ENCODE measurements at regions of chr2 and their contacts with region 1.

Region 1: DNA sequence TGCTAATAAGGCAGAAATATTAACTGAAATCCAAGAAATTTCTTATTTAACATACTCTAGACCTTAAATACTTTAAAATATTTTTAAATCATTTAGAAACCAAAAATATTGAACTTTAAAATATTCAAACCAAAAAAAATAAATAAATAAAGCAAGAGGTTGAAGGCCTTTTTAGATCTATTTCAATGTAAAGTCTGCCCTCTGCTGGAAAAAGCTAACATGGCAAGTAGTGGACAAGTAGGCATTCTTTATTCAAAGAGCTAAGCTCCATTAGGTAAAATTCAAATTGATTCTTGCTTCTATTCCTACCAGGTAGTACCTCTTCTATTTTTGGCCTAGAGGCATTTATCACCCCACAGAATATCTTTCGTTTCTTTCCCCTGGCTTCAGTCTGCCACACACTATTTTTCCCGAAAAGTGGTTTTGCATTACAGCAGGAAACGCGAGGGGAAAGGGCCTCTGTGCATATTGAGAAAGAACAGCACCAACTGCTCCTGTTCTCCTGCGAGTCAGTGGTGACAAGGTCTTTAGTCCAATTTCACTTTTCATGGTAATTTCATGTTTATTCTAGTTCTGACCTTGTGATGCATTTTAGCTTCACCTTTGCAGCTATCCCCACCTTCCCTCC is 20.4 kb downstream of the IFIH1 start:
- DNase-seq: no peak

Region 2: DNA sequence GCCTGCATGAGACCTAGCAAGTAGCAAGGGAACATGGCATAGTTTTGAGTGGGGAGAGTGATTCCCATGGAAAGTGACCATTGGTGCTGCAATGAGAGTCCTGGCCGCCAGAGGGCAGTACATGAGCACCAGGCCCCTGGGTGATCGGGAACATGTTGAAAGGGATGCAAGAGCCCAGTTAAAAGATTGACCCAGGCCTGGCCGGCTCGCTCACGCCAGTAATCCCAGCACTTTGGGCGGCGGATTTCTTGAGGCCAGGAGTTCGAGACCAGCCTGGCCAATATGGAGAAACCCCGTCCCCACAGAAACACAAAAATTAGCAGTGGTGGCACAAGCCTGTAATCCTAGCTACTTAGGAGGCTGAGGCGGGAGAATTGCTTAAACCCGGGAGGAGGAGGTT is 77.0 kb before region 1 on chr2:
- intact Hi-C with region 1: loop called (anchors 2 to 10 kb)
- DNase-seq: peak; percentile 91

Region 3: DNA sequence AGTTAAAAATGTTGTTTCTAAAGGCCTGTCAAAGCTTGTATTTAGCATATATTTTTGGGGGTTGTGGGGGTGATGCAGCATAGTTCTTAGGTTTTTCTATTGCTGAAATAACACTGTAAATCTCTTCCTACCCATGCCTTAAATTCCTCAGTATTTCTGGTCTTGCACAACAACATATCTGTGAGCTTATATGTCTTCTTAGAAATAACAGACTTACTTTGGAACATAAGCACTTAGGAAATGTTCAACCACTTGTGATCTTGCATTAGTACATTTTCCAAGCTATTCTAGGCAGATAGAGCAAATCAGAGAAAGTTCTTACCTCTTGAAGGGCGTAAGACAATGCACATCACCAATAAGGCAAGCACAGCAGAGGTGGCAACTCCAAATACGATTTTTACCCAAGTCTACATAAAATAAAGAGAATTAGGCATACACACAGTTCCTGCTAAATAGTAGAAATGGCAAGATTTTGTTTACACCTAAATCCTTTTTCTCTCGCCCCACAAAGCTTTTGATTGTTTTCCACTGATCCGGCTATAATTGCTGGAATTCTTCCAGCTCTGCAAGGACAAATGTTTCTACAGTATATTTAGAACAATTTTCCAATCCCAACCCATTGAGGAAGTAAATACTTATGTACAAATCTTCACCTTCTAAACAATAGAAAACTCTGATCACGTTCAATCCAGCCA is 55.3 kb before region 1 on chr2:
- intact Hi-C with region 1: loop called in 1 of 2 experiments (anchors 2 kb)
- DNase-seq: no peak

Region 4: DNA sequence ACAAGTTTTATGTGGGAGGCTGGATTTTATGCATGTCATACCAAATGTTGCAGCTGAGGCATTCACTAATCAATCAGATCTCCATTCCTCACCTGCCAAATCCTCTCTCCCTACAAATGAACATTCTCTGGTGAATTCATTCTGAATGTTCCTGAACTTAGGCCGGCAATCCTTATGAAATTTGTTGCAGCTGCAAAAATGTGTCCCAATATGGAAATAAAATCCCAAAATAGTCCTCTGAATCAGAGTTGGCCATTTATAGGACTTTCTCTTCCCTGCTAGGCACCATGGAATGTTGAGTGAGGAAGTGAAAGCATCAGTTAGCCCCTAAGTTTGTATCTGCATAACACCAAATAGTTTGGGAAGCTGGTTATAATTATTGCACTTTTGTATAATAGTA is 71.5 kb after region 1 on chr2:
- intact Hi-C with region 1: no loop called
- DNase-seq: no peak

Region 5: GRCh38 chr2:162581959-162582798 is 284.1 kb after region 1 on chr2:
- intact Hi-C with region 1: no loop called
- DNase-seq: no peak

Measured in posterior vena cava (tissue), 2 donors.